ENCODE measurements at regions of chr20 and their contacts with region 1.

Region 1: GRCh38 chr20:36605399-36606157 is at the start of gene RAB5IF:
- DNase-seq: peak; percentile 98
- H3K4me3 ChIP-seq: peak within 1 kb of the TSS; percentile 99
- H3K27ac ChIP-seq: peak within 1 kb of the TSS; percentile 32
- H3K27me3 ChIP-seq: peaks cover 2% of the 10 kb centered on the region
- CTCF ChIP-seq: peak; percentile 87
- polyA plus RNA-seq, gene RAB5IF: 125 and 151 TPM in 2 replicates

Region 2: DNA sequence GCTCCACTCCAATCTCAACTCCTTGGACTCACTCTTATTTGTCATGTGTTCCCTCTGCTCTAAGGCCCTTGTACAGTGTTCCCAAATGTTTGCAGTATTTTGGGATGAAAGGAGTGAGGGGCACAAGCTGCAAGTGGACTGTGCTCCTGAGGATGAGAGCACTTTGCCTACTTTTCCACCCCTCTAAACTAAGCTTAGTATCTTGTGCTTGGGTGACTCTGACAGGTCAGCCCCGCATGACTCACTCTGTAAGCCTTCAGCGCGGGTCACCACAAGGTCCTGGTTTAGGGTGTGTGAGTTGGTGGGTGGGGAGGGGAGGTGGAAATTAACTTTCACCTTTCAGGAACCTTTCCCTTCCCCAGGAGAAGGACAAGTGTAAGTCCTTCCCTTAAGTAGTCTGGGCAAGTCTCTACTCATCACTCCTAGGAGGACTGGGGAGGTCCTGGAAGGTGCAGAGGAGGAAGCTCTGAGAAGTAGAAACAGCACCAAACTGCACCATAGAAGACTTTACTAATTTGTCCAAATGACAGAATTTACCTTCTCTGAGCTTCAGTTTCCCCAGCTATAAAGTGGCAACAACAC is 519.8 kb before region 1 on chr20:
- CTCF ChIA-PET with region 1: no interaction called
- POLR2A ChIA-PET with region 1: no interaction called
- DNase-seq: no peak
- H3K4me3 ChIP-seq: no peak overlapping the region
- H3K27ac ChIP-seq: no peak overlapping the region
- H3K27me3 ChIP-seq: peaks cover 8% of the 10 kb centered on the region
- CTCF ChIP-seq: no peak

Region 3: GRCh38 chr20:36285746-36286447 is 319.7 kb before region 1 on chr20:
- CTCF ChIA-PET with region 1: no interaction called
- POLR2A ChIA-PET with region 1: no interaction called
- DNase-seq: no peak
- H3K4me3 ChIP-seq: no peak overlapping the region
- H3K27ac ChIP-seq: no peak overlapping the region
- H3K27me3 ChIP-seq: peaks cover 10% of the 10 kb centered on the region
- CTCF ChIP-seq: no peak

Region 4: DNA sequence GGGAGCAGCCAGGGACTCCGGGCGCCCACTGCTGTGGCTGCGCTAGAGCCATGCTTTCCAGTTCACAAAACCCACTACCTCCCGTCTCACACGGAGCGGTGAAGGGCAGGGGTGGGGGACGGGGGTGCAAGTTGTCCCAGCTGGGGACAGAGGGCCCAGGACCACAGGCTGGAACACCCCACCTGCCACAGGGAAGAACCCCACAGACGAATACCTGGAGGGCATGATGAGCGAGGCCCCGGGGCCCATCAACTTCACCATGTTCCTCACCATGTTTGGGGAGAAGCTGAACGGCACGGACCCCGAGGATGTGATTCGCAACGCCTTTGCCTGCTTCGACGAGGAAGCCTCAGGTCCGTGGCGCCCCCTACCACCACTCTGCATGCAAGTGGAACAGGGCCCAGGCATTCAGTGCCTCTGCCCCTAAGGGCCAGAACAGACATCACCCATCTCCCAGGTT is 57.7 kb before region 1 on chr20:
- CTCF ChIA-PET with region 1: interaction called, 11 read pairs
- POLR2A ChIA-PET with region 1: interaction called, 4 read pairs
- DNase-seq: no peak
- H3K4me3 ChIP-seq: no peak overlapping the region
- H3K27ac ChIP-seq: no peak overlapping the region
- H3K27me3 ChIP-seq: no peaks in the 10 kb centered on the region
- CTCF ChIP-seq: peak; percentile 34; the same call in 1 of the 2 replicates

Region 5: DNA sequence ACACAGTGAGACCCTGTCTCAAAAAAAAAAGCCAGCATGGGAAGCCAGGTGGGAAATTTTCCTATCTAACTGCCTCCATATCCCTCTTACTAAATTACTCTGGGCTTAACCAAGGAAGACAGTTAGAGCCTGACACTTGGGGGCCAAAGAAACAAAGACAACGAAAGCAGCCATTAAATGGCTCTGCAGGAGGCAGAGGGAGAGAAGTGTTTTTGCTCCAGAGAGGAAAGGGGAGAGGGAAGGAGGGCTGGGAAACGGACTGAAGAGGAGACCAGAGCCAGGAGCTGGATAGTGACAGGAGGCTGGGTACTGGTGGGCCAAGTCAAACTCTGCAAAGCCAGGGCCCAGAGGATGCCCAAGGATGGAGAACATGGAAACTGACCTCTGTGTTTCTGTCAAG is 42.9 kb before region 1 on chr20:
- CTCF ChIA-PET with region 1: interaction called, 16 read pairs
- POLR2A ChIA-PET with region 1: interaction called, 10 read pairs
- DNase-seq: no peak
- H3K4me3 ChIP-seq: no peak overlapping the region
- H3K27ac ChIP-seq: no peak overlapping the region
- H3K27me3 ChIP-seq: no peaks in the 10 kb centered on the region
- CTCF ChIP-seq: no peak

Region 6: DNA sequence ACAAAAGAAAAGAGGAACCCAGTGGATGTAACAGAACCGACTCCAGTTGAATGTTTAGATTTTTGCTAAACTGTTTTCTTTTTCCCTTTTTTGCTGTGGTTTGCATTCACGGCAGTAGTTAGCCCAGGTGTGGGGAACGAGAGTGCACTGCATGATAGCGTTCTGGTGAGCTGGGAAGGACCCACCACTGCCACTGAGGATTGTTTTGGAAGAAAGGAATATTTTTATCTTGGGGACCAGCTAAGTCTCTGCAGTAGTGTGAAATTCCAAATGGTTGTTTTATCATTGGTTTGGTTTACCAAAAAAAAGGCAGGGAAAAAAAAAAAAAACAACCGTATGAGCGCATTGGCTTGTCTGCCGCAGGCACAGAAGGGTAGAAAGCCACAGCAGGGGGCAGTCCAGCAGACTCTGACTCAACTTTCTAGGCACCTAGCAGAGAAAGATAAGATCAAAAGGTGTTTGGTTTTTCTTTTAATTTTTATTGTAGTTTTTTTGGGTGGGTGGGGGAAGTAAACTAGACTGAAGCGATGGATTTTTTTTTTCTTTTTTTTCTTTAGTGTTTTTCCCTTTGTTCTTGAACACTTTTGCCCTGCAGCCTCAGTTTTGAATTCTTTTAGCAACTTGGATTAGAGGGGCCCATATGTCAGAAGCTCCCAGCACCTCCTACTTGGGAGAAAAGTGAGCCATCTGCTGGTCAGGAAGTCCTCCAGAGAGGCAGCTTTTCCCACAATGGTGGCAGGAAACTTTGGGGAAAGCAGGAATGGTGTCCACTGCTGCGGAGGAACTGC is 13.5 kb before region 1 on chr20:
- CTCF ChIA-PET with region 1: interaction called, 27 read pairs
- POLR2A ChIA-PET with region 1: interaction called, 4 read pairs
- DNase-seq: no peak
- H3K4me3 ChIP-seq: no peak overlapping the region
- H3K27ac ChIP-seq: no peak overlapping the region
- H3K27me3 ChIP-seq: no peaks in the 10 kb centered on the region
- CTCF ChIP-seq: peak; percentile 50